ENCODE measurements at regions of chr17 and their contacts with region 1.

Region 1: DNA sequence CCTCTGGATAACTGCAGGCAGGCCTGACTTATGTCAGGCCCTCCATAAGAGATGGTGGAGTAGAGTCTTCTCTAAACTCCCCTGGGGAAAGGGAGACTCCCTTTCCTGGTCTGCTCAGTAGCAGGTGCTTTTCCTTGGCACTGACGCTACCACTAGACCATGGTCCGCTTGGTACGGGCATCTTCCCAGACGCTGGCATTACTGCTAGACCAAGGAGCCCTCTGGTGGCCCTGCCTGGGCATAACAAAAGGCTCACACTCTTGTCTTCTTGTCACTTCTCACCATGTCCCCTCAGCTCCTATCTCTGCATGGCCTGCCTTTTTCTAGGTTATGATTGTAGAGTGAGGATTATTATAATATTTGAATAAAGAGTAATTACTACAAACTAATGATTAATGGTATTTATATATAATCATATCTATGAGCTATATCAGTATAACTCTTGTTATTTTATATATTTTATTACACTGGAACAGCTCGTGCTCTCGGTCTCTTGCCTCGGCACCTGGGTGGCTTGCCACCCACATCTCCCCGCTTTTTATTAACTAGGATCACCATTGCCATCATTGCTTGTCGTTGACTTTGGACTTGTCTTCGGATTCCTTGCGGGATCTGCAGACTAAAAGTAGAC is 59.8 kb upstream of the ARL4D start:
- DNase-seq: peak; percentile 75 to 84
- H3K4me3 ChIP-seq: no peak overlapping the region
- H3K27ac ChIP-seq: no peak overlapping the region
- H3K4me1 ChIP-seq: peaks cover 0 to 21% (median 8%) of the 10 kb centered on the region in 4 donors
- H3K27me3 ChIP-seq: no peaks in the 10 kb centered on the region
- CTCF ChIP-seq: peak; percentile 57 to 69

Region 2: GRCh38 chr17:43018008-43018853 is 320.8 kb before region 1 on chr17:
- intact Hi-C with region 1: loop called (anchors 5 kb)
- DNase-seq: no peak
- H3K4me3 ChIP-seq: no peak overlapping the region
- H3K27ac ChIP-seq: peak overlapping the region in 1 of 2 donors; percentile 23
- H3K4me1 ChIP-seq: peaks cover 0 to 29% (median 22%) of the 10 kb centered on the region in 4 donors
- H3K27me3 ChIP-seq: no peaks in the 10 kb centered on the region
- CTCF ChIP-seq: no peak

Region 3: GRCh38 chr17:43211480-43212402 is 127.3 kb before region 1 on chr17 and contains the start of gene TMEM106A:
- intact Hi-C with region 1: loop called (anchors 5 kb)
- DNase-seq: peak; percentile 79 to 89
- H3K4me3 ChIP-seq: peak within 1 kb of the TSS; percentile 57 to 58
- H3K27ac ChIP-seq: peak within 1 kb of the TSS; percentile 75
- H3K4me1 ChIP-seq: peaks cover 0 to 21% (median 17%) of the 10 kb centered on the region in 4 donors
- H3K27me3 ChIP-seq: no peaks in the 10 kb centered on the region
- CTCF ChIP-seq: peak; percentile 27 to 43

Region 4: DNA sequence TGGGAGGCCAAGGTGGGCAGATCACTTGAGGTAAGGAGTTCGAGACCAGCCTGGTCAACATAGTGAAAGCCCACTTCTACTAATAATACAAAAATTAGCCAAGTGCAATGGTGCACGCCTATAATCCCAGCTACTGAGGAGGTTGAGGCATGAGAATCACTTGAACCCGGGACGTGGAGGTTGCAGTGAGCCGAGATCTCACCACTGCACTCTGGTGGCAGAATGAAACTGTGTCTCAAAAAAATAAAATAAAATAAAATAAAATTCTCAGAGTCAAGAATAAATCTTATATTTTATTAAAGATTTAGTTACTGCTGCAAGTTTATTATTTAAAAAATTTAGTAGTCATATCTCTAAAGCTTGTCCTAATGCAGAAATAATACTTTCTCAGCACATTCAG is 89.5 kb after region 1 on chr17:
- intact Hi-C with region 1: no loop called
- DNase-seq: no peak
- H3K4me3 ChIP-seq: no peak overlapping the region
- H3K27ac ChIP-seq: no peak overlapping the region
- H3K4me1 ChIP-seq: peaks cover 0 to 8% (median 5%) of the 10 kb centered on the region in 4 donors
- H3K27me3 ChIP-seq: no peaks in the 10 kb centered on the region
- CTCF ChIP-seq: peak in 1 of 2 experiments; percentile 12